ENCODE measurements at regions of chr14 and their contacts with region 1.

Region 1: GRCh38 chr14:74663884-74664283 is 49.0 kb downstream of the AREL1 start:
- DNase-seq: no peak
- H3K4me3 ChIP-seq: no peak overlapping the region
- H3K27ac ChIP-seq: peak overlapping the region in 1 of 2 donors; percentile 44
- H3K4me1 ChIP-seq: no peaks in the 10 kb centered on the region
- H3K27me3 ChIP-seq: no peaks in the 10 kb centered on the region
- CTCF ChIP-seq: no peak
- POLR2A ChIP-seq: no peak

Region 2: DNA sequence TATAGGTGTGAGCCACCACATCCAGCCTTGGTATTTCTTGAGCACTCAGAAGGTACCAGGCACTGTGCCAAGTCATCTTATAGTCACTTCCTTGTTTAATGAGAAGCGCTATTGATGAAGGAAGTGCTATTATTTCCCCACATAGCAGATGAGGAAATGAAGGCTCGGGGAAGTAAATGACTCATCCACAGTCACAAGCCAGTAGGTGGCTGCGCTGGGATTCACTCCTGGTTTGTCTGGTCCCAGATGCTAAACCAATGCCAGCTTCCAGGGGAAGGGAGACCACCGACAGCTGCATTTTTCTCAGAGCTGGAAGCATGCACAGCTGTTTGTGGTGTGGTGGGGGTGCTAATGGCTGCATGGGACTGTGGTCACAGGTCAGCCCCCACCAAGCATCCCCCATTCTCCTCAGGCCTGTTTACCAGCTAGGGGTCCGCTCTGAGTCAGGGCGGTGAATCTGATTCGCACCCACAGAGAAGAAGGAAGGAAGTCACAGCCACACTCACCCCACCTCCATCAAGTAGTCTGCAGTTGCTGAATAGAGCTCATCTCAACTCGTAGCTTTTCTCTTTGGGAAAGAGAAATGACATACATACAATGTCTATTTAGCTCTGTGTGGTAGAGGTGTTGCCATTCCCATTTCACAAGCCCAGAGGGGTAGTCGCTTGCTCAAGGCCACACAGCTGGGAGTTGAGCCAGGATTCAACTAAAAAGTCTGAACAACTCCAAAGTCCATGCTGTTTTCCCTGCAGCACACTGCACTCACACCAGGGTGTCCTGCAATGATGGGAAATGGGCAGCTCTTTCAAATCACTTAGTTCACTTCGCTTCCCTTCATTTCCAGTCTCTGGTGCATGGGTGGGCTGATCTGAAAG is 45.6 kb before region 1 on chr14:
- intact Hi-C with region 1: loop called (anchors 5 kb)
- DNase-seq: no peak
- H3K4me3 ChIP-seq: no peak overlapping the region
- H3K27ac ChIP-seq: no peak overlapping the region
- H3K4me1 ChIP-seq: no peaks in the 10 kb centered on the region
- H3K27me3 ChIP-seq: no peaks in the 10 kb centered on the region
- CTCF ChIP-seq: no peak
- POLR2A ChIP-seq: no peak

Region 3: DNA sequence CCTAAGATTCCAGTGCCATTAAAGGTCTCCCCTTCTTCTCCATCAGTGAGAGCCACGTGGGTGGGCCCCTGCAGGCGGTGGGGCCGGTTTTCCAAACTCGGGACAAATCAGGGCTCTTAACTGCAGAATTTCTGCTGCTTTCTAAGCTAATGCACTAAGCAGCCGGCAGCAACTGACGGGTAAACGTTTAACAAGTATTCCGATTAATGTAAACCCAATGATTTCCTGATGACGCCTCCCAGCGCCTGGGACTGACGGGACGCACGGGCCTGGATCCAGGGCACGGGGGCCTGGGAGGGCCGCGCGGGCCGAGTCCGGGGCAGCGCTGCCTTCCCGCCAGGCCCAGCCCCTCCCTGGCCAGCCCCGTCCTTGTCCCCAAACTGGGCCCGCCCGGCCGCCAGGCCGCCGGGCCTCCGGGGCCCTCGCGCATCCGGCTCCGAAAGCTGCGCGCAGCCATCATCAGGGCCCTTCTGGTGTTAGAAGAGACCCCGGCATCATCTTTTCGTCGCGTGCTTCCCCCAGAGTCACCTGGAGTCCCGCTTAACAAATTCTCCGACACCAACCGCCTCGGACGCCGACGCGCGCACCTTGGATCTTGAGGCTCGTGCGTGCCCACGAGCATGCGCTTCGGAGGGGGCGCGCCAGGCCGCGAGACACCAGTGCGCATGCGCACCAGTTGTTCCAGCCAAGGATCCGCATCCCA is 387.1 kb after region 1 on chr14 and contains the start of gene MLH3:
- intact Hi-C with region 1: no loop called
- DNase-seq: peak; percentile 80
- H3K4me3 ChIP-seq: peak within 1 kb of the TSS; percentile 60 to 74
- H3K27ac ChIP-seq: peak within 1 kb of the TSS; percentile 87 to 93
- H3K4me1 ChIP-seq: peaks cover 3% of the 10 kb centered on the region
- H3K27me3 ChIP-seq: no peaks in the 10 kb centered on the region
- CTCF ChIP-seq: no peak
- POLR2A ChIP-seq: peak; percentile 72
- total RNA-seq, gene MLH3: 23.3 to 29.6 TPM

Region 4: GRCh38 chr14:75213172-75213571 is 549.3 kb after region 1 on chr14:
- intact Hi-C with region 1: no loop called
- DNase-seq: no peak
- H3K4me3 ChIP-seq: no peak overlapping the region
- H3K27ac ChIP-seq: no peak overlapping the region
- H3K4me1 ChIP-seq: no peaks in the 10 kb centered on the region
- H3K27me3 ChIP-seq: no peaks in the 10 kb centered on the region
- CTCF ChIP-seq: no peak
- POLR2A ChIP-seq: no peak

Measured in prostate gland (tissue), 2 donors.